ENCODE measurements at regions of chr4 and their contacts with region 1.

Region 1: DNA sequence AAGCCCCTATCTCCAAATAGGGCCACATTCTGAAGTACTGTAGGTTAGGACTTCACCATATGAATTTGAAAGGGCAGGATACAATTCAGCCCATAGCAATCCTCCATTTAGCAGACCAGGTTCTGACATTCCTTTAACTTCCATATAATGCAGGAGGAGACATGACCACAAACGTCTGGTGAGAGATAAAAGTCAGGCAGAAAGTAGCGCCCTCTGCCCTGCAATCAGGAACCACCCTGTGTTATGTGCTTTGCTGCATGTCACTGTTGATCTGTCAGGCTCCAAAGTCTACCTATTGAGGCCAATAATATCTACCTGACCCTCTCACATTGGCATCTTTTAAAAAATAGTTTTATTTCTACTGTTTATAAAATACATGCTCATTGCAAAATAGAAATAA is 30.2 kb upstream of the SEPSECS start:
- DNase-seq: no peak
- CTCF ChIP-seq: no peak

Region 2: GRCh38 chr4:25284466-25284865 is 94.1 kb after region 1 on chr4:
- CTCF ChIA-PET with region 1: no interaction called
- POLR2A ChIA-PET with region 1: interaction called, 10 read pairs
- DNase-seq: no peak
- CTCF ChIP-seq: no peak